Activated B cell treated with CpG ODN at 0.5 μM for 24 hours (primary cell): ENCODE measurements at regions of chr17 and their contacts with region 1.

Region 1: GRCh38 chr17:78745407-78746088 is 36.5 kb downstream of the CYTH1 start:
- DNase-seq: no peak
- ATAC-seq: no peak
- H3K4me3 Mint-ChIP-seq: peak overlapping the region; percentile 52
- H3K27ac Mint-ChIP-seq: peak overlapping the region; percentile 87
- H3K4me1 Mint-ChIP-seq: peaks cover 92% of the 10 kb centered on the region
- H3K27me3 Mint-ChIP-seq: no peaks in the 10 kb centered on the region
- CTCF ChIP-seq: peak; percentile 30

Region 2: GRCh38 chr17:78497115-78497540 is 248.4 kb before region 1 on chr17:
- CTCF ChIA-PET with region 1: interaction called, 4 read pairs
- POLR2A ChIA-PET with region 1: no interaction called
- intact Hi-C with region 1: loop called (anchors 1 kb)
- DNase-seq: peak; percentile 26
- ATAC-seq: peak; percentile 77
- H3K4me3 Mint-ChIP-seq: no peak overlapping the region
- H3K27ac Mint-ChIP-seq: no peak overlapping the region
- H3K4me1 Mint-ChIP-seq: no peaks in the 10 kb centered on the region
- H3K27me3 Mint-ChIP-seq: no peaks in the 10 kb centered on the region
- CTCF ChIP-seq: peak; percentile 19

Region 3: GRCh38 chr17:78583091-78583490 is 162.5 kb before region 1 on chr17:
- CTCF ChIA-PET with region 1: no interaction called
- POLR2A ChIA-PET with region 1: no interaction called
- intact Hi-C with region 1: no loop called
- DNase-seq: no peak
- ATAC-seq: peak; percentile 37
- H3K4me3 Mint-ChIP-seq: no peak overlapping the region
- H3K27ac Mint-ChIP-seq: no peak overlapping the region
- H3K4me1 Mint-ChIP-seq: no peaks in the 10 kb centered on the region
- H3K27me3 Mint-ChIP-seq: peaks cover 9% of the 10 kb centered on the region
- CTCF ChIP-seq: no peak

Region 4: GRCh38 chr17:78723001-78723796 is 22.3 kb before region 1 on chr17:
- CTCF ChIA-PET with region 1: interaction called, 11 read pairs
- POLR2A ChIA-PET with region 1: interaction called, 17 read pairs
- intact Hi-C with region 1: no loop called
- DNase-seq: no peak
- ATAC-seq: no peak
- H3K4me3 Mint-ChIP-seq: peak overlapping the region; percentile 77
- H3K27ac Mint-ChIP-seq: peak overlapping the region; percentile 91
- H3K4me1 Mint-ChIP-seq: peaks cover 99% of the 10 kb centered on the region
- H3K27me3 Mint-ChIP-seq: no peaks in the 10 kb centered on the region
- CTCF ChIP-seq: no peak

Region 5: DNA sequence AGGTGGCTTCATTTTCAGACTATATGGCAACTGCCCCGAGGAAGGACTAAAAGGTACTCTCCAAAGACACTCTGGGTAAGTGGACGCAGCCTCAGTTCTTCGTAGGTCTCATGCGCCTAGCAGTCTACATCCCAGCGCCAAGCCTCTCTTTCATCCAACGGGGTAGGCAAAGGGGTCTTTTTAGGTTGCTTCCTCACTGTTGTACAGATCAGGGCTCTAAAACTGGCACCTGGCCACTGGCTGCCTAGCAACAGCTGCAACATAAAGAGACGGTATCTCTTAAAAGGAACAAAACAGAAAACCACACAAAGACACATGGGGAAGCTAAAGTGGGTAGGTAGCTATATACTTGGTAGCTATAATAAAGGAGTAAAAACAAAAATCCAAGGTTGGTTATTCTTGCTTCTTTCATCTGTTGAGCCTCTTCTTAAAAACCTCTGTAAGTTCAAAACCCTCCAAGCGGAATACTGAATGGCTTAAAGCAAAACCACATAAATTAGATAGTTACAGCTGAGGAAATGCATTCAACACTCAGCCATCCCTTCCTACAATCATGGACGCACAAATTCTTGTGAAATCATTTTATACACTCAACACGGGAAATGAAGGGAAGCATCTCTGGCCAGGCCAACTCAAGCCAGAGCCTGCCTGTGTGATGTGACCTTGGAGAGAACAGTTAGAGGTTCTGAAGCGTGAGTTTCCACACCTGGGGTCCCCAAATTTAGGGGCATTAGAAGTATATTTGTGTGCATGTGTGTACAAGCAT is 13.8 kb after region 1 on chr17:
- CTCF ChIA-PET with region 1: interaction called, 4 read pairs
- POLR2A ChIA-PET with region 1: interaction called, 6 read pairs
- intact Hi-C with region 1: loop called (anchors 1 kb)
- DNase-seq: no peak
- ATAC-seq: peak; percentile 74
- H3K4me3 Mint-ChIP-seq: peak overlapping the region; percentile 70
- H3K27ac Mint-ChIP-seq: peak overlapping the region; percentile 94
- H3K4me1 Mint-ChIP-seq: peaks cover 81% of the 10 kb centered on the region
- H3K27me3 Mint-ChIP-seq: no peaks in the 10 kb centered on the region
- CTCF ChIP-seq: no peak

Region 6: DNA sequence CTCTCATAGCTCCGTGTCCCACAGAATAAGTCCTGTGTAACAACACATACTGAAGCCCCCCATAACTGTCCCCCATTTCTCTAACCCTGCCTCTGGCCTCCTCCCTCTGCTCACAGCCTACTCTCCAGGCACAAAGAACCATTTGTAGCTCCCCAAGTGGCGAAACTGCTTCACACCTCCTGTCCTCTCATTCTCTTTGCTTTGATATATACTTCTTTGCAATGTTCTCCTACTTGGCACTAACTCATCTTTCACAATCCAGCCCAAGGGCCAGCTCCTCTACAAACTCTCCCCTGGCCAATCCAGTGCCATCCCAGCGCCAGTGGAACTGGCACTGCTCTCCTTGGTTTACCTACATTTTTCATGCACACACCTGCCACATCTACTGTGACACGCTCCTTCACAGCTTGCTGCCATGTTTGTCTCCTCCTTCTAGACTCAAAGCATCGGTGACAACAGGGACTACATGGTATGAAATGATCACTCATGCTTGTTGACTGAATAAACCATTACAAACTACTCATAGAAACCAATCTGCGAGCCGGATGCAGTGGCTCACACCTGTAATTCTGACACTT is 23.7 kb after region 1 on chr17:
- CTCF ChIA-PET with region 1: interaction called, 5 read pairs
- POLR2A ChIA-PET with region 1: interaction called, 19 read pairs
- intact Hi-C with region 1: loop called (anchors 2 kb)
- DNase-seq: no peak
- ATAC-seq: no peak
- H3K4me3 Mint-ChIP-seq: no peak overlapping the region
- H3K27ac Mint-ChIP-seq: no peak overlapping the region
- H3K4me1 Mint-ChIP-seq: peaks cover 47% of the 10 kb centered on the region
- H3K27me3 Mint-ChIP-seq: no peaks in the 10 kb centered on the region
- CTCF ChIP-seq: no peak

Region 7: GRCh38 chr17:78774956-78775571 is 29.5 kb after region 1 on chr17:
- CTCF ChIA-PET with region 1: interaction called, 4 read pairs
- POLR2A ChIA-PET with region 1: interaction called, 19 read pairs
- intact Hi-C with region 1: loop called (anchors 2 kb)
- DNase-seq: peak; percentile 57
- ATAC-seq: peak; percentile 56
- H3K4me3 Mint-ChIP-seq: peak overlapping the region; percentile 88
- H3K27ac Mint-ChIP-seq: peak overlapping the region; percentile 97
- H3K4me1 Mint-ChIP-seq: peaks cover 85% of the 10 kb centered on the region
- H3K27me3 Mint-ChIP-seq: no peaks in the 10 kb centered on the region
- CTCF ChIP-seq: no peak

Region 8: GRCh38 chr17:78781948-78782916 is 36.7 kb after region 1 on chr17 and contains the start of gene CYTH1:
- CTCF ChIA-PET with region 1: no interaction called
- POLR2A ChIA-PET with region 1: interaction called, 16 read pairs
- intact Hi-C with region 1: no loop called
- DNase-seq: peak; percentile 98
- ATAC-seq: peak; percentile 80
- H3K4me3 Mint-ChIP-seq: peak within 1 kb of the TSS; percentile 92
- H3K27ac Mint-ChIP-seq: peak within 1 kb of the TSS; percentile 93
- H3K4me1 Mint-ChIP-seq: peaks cover 40% of the 10 kb centered on the region
- H3K27me3 Mint-ChIP-seq: no peaks in the 10 kb centered on the region
- CTCF ChIP-seq: no peak
- total RNA-seq, gene CYTH1: 368 and 391 TPM in 2 replicates